PC-9 (cell line): ENCODE measurements at regions of chr17 and their contacts with region 1.

Region 1: DNA sequence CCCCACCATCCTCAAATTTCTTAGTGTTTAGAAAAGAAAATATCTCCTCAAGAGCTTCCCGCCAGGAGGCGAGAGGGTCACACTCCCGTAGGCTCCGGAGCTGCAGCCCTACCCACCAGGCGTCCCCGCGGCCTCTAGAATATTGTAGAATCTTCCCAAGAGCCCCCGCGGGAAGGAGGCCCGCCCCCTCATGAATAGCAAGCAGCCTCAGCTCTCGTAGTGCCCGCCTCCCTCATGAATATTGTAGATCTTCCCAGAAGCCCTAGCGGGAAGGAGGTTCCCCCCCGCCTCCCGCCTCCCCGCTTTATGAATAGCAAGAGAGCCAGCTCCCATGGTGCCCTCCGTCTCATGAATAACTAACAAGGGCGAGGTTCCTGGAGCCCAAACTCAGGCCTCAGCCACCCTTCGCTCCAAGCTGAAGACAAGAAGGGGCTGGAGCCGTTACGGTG is at the start of gene FBXO47:
- DNase-seq: peak; percentile 75 to 89
- H3K4me3 ChIP-seq: peak within 1 kb of the TSS; percentile 47; the same call in 1 of the 2 replicates
- H3K27ac ChIP-seq: no peak within 1 kb of the TSS
- H3K4me1 ChIP-seq: no peaks in the 10 kb centered on the region
- H3K27me3 ChIP-seq: no peaks in the 10 kb centered on the region
- CTCF ChIP-seq: no peak
- total RNA-seq, gene FBXO47: not detected in 2 replicates

Region 2: DNA sequence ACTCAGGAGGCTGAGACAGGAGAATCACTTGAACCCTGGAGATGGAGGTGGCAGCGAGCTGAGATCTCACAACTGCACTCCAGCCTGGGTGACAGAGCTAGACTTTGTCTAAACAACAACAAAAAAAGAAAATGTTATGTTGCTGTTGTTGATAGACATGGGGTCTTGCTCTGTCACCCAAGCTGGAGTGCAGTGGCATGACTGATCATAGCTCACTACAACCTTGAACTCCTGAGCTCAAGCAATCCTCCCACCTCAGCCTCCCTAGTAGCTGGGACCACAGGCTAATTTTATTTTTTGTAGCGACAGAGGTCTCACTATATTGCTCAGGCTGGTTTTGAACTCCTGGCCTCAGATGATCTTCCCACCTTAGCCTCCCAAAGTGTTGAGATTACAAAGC is 20.1 kb before region 1 on chr17:
- CTCF ChIA-PET with region 1: no interaction called
- POLR2A ChIA-PET with region 1: no interaction called
- intact Hi-C with region 1: no loop called
- DNase-seq: no peak
- H3K4me3 ChIP-seq: no peak overlapping the region
- H3K27ac ChIP-seq: no peak overlapping the region
- H3K4me1 ChIP-seq: no peaks in the 10 kb centered on the region
- H3K27me3 ChIP-seq: no peaks in the 10 kb centered on the region
- CTCF ChIP-seq: no peak

Region 3: GRCh38 chr17:38982858-38983746 is 15.8 kb after region 1 on chr17:
- CTCF ChIA-PET with region 1: interaction called, 11 read pairs
- POLR2A ChIA-PET with region 1: interaction called, 5 read pairs
- intact Hi-C with region 1: no loop called
- DNase-seq: peak; percentile 34 to 51
- H3K4me3 ChIP-seq: no peak overlapping the region
- H3K27ac ChIP-seq: no peak overlapping the region
- H3K4me1 ChIP-seq: no peaks in the 10 kb centered on the region
- H3K27me3 ChIP-seq: no peaks in the 10 kb centered on the region
- CTCF ChIP-seq: peak; percentile 86

Region 4: DNA sequence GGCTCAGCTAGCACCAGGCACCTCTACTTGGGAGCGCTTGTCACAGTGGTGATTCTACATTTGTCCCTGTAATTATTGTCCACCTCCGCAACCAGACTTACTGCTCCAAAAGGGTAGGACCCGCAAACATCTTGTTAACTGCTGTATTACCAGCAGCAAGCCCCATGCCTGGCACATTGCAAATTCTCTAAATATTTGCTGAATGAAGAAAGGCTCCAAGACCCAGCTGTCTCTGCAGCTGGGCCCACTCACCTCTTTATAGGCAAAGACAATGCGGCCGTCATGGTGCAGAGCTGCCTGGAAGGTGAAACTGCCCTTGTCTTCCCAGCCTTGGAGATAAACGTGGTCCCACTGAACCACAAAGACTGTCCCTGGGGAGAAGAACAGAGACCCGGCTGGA is 139.8 kb after region 1 on chr17:
- CTCF ChIA-PET with region 1: interaction called, 11 read pairs
- POLR2A ChIA-PET with region 1: no interaction called
- intact Hi-C with region 1: no loop called
- DNase-seq: no peak
- H3K4me3 ChIP-seq: no peak overlapping the region
- H3K27ac ChIP-seq: no peak overlapping the region
- H3K4me1 ChIP-seq: peaks cover 8% of the 10 kb centered on the region; the same call in 1 of the 2 replicates
- H3K27me3 ChIP-seq: peaks cover 15% of the 10 kb centered on the region; the same call in 1 of the 2 replicates
- CTCF ChIP-seq: no peak